ENCODE measurements at regions of chr5 and their contacts with region 1.

Region 1: GRCh38 chr5:151651997-151652645 is 34.6 kb downstream of the SPARC start:
- DNase-seq: no peak
- H3K4me3 ChIP-seq: no peak overlapping the region
- H3K27ac ChIP-seq: no peak overlapping the region
- H3K27me3 ChIP-seq: no peaks in the 10 kb centered on the region
- CTCF ChIP-seq: peak; percentile 95

Region 2: DNA sequence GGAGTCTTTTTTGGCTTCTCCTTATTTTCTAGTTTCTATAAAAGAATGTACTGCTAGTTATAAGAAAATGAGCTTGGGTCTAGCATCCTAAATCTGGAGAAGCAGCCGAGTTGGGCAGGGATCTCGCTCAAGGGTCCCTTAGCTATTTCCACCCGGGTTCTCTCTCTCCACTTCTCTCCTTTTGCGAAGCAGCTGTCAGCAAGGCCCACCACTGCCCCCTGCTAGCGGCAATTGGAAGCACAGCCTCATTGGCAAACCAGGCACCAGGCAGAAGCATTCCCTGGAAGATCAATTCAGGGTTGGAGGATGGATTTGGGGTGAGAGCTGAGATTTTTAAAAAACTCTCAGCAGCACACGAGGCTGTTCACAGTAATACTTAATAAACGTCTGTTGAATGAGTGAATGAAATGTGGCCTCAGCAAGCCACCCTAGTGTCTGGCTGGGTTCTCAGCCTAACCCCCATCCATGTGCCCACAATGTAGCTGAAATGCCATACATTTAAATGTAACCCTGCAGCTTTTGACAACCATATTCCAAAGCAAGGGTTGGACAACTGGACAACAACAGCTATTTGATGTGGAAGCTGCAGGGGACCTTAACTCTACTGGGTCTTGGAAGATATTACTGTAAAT is 536.7 kb before region 1 on chr5:
- CTCF ChIA-PET with region 1: interaction called, 12 read pairs
- POLR2A ChIA-PET with region 1: no interaction called
- DNase-seq: no peak
- H3K4me3 ChIP-seq: no peak overlapping the region
- H3K27ac ChIP-seq: no peak overlapping the region
- H3K27me3 ChIP-seq: no peaks in the 10 kb centered on the region
- CTCF ChIP-seq: peak; percentile 100

Region 3: DNA sequence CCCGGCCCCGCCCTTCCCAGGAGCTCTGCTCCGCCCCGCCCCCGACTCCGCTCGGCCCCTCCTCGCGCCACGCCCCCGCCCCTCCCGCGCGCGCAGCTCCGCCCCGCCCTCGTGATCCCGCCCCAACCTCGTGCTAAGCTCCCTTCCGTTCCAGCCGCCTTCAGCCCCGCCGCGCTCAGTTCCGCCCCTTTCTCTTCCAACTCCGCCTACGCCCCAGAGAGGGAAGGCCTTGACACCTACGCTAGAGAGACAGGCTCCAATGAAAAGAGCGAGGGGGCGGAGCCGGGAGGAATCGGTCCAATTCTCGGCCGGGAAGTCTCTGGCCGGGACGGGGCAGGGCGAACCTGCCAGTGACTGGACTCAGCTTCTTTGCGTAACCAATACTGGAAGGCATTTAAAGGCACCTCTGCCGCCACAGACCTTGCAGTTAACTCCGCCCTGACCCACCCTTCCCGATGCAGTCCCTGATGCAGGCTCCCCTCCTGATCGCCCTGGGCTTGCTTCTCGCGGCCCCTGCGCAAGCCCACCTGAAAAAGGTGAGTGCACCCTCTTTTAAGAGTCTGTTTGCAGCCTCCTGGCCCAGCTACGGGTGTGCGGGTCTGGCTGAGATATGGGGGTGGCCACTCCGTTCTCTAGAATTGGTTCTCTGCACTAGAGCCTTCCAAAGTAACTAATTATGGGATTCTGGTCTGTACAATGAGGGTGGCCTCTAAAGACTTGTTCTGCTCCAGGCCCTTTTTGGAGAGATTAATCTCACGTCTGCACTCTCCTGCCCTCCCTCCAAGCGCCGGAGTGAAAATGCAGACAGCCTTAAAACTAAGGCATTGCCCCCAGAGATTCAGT is 399.1 kb before region 1 on chr5 and contains the start of gene GM2A:
- CTCF ChIA-PET with region 1: interaction called, 13 read pairs
- POLR2A ChIA-PET with region 1: no interaction called
- DNase-seq: peak; percentile 97
- H3K4me3 ChIP-seq: peak within 1 kb of the TSS; percentile 90
- H3K27ac ChIP-seq: no peak within 1 kb of the TSS
- H3K27me3 ChIP-seq: peaks cover under 1% of the 10 kb centered on the region
- CTCF ChIP-seq: no peak
- polyA plus RNA-seq, gene GM2A: 18.4 and 20.9 TPM in 2 replicates

Region 4: GRCh38 chr5:151447174-151448037 is 204.7 kb before region 1 on chr5 and contains the start of gene SLC36A1:
- CTCF ChIA-PET with region 1: interaction called, 101 read pairs
- POLR2A ChIA-PET with region 1: interaction called, 7 read pairs
- DNase-seq: peak; percentile 70
- H3K4me3 ChIP-seq: peak within 1 kb of the TSS; percentile 73
- H3K27ac ChIP-seq: peak within 1 kb of the TSS; percentile 39
- H3K27me3 ChIP-seq: no peaks in the 10 kb centered on the region
- CTCF ChIP-seq: peak; percentile 98
- polyA plus RNA-seq, gene SLC36A1: 22.2 and 22.3 TPM in 2 replicates

Region 5: GRCh38 chr5:151523335-151523734 is 128.8 kb before region 1 on chr5:
- CTCF ChIA-PET with region 1: interaction called, 37 read pairs
- POLR2A ChIA-PET with region 1: no interaction called
- DNase-seq: no peak
- H3K4me3 ChIP-seq: no peak overlapping the region
- H3K27ac ChIP-seq: no peak overlapping the region
- H3K27me3 ChIP-seq: peaks cover 7% of the 10 kb centered on the region
- CTCF ChIP-seq: peak; percentile 77

Region 6: GRCh38 chr5:151686674-151687407 is 34.7 kb after region 1 on chr5 and contains the start of gene SPARC:
- CTCF ChIA-PET with region 1: interaction called, 30 read pairs
- POLR2A ChIA-PET with region 1: interaction called, 11 read pairs
- DNase-seq: peak; percentile 90
- H3K4me3 ChIP-seq: peak within 1 kb of the TSS; percentile 99
- H3K27ac ChIP-seq: peak within 1 kb of the TSS; percentile 94
- H3K27me3 ChIP-seq: no peaks in the 10 kb centered on the region
- CTCF ChIP-seq: 0 out of 2 replicates have a peak, but pooled peaks have one; percentile 16
- polyA plus RNA-seq, gene SPARC: 5,773 and 5,780 TPM in 2 replicates

Region 7: GRCh38 chr5:151771259-151772028 is 119.3 kb after region 1 on chr5 and contains the start of gene G3BP1:
- CTCF ChIA-PET with region 1: interaction called, 19 read pairs
- POLR2A ChIA-PET with region 1: interaction called, 5 read pairs
- DNase-seq: peak; percentile 100
- H3K4me3 ChIP-seq: peak within 1 kb of the TSS; percentile 91
- H3K27ac ChIP-seq: peak within 1 kb of the TSS; percentile 95
- H3K27me3 ChIP-seq: no peaks in the 10 kb centered on the region
- CTCF ChIP-seq: peak; percentile 68
- polyA plus RNA-seq, gene G3BP1: 87.7 and 101 TPM in 2 replicates

Region 8: GRCh38 chr5:151829370-151829769 is 177.2 kb after region 1 on chr5:
- CTCF ChIA-PET with region 1: no interaction called
- POLR2A ChIA-PET with region 1: no interaction called
- DNase-seq: no peak
- H3K4me3 ChIP-seq: no peak overlapping the region
- H3K27ac ChIP-seq: no peak overlapping the region
- H3K27me3 ChIP-seq: no peaks in the 10 kb centered on the region
- CTCF ChIP-seq: no peak

Measured in AG04450 (cell line).